GM12878 (cell line): ENCODE measurements at regions of chr3 and their contacts with region 1.

Region 1: GRCh38 chr3:112734718-112735350 is 93.9 kb upstream of the CCDC80 start:
- DNase-seq: peak; percentile 40
- ATAC-seq: peak; percentile 94
- H3K4me3 ChIP-seq: no peak overlapping the region
- H3K27ac ChIP-seq: no peak overlapping the region
- H3K4me1 ChIP-seq: no peaks in the 10 kb centered on the region
- H3K27me3 ChIP-seq: no peaks in the 10 kb centered on the region; a peak in 1 of 4 replicates
- CTCF ChIP-seq: peak; percentile 71 to 84 (median 71)
- EP300 ChIP-seq: no peak
- POLR2A ChIP-seq: no peak
- RAD21 ChIP-seq: peak; percentile 91

Region 2: DNA sequence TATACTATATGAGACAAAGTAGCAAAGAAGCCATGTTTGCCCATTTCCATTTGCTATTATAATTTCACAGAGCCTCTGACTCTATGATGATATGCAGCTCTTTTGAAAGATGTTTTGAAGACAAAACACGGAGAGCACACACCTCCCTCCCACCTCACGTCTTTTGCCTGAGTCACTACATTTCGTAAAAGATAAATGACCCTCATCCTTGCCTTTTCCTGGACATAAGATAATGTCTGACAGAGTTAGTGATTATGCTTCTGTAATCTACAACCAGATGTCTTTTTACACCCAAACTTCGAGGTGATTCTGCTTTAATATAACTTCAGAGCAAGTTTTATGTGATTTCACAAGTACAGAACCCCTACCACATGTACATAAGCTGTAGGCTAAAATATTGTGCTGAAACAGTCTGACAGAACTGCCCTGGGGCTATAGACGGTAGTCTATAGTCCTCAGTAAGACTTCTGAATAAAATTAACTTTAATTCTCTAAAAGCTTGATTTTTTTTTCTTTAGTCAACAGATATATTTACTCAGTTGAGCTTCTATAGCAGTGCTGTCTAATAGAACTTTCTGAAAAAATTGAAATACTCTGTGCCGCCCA is 11.9 kb after region 1 on chr3:
- CTCF ChIA-PET with region 1: interaction called, 65 read pairs
- POLR2A ChIA-PET with region 1: no interaction called
- RAD21 ChIA-PET with region 1: interaction called, 4 read pairs
- SMC1A ChIA-PET with region 1: interaction called, 46 read pairs
- in situ Hi-C with region 1: no loop called
- intact Hi-C with region 1: no loop called
- DNase-seq: no peak
- ATAC-seq: no peak
- H3K4me3 ChIP-seq: no peak overlapping the region
- H3K27ac ChIP-seq: no peak overlapping the region
- H3K4me1 ChIP-seq: no peaks in the 10 kb centered on the region
- H3K27me3 ChIP-seq: no peaks in the 10 kb centered on the region; a peak in 1 of 4 replicates
- CTCF ChIP-seq: no peak
- EP300 ChIP-seq: no peak
- POLR2A ChIP-seq: no peak
- RAD21 ChIP-seq: no peak

Region 3: DNA sequence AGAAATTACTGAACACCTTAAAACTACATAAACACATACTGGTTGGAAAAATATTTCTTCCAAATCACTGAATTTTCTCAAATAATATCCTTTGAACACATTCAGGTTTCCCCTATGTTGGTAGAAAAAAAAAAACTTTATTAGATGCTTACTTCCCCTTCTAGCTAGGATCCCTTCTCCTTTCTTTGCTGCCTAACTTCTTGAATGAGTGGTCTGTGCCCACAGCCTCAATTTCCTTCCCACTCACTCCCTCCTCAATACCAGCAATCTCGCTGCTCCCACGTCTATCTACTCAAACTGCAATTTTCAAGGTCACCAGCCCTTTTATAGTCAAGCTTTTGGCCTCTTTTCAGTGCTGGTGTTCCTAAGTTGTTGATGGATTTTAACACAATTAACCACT is 231.8 kb after region 1 on chr3:
- CTCF ChIA-PET with region 1: interaction called, 61 read pairs
- POLR2A ChIA-PET with region 1: no interaction called
- RAD21 ChIA-PET with region 1: interaction called, 62 read pairs
- SMC1A ChIA-PET with region 1: interaction called, 89 read pairs
- in situ Hi-C with region 1: no loop called
- intact Hi-C with region 1: no loop called
- DNase-seq: no peak
- ATAC-seq: no peak; the same call in 2 of the 3 replicates
- H3K4me3 ChIP-seq: no peak overlapping the region
- H3K27ac ChIP-seq: 0 out of 2 replicates have a peak overlapping the region, but pooled peaks have one; percentile 44
- H3K4me1 ChIP-seq: peaks cover 25% of the 10 kb centered on the region
- H3K27me3 ChIP-seq: no peaks in the 10 kb centered on the region
- CTCF ChIP-seq: no peak
- EP300 ChIP-seq: no peak
- POLR2A ChIP-seq: no peak
- RAD21 ChIP-seq: no peak

Region 4: DNA sequence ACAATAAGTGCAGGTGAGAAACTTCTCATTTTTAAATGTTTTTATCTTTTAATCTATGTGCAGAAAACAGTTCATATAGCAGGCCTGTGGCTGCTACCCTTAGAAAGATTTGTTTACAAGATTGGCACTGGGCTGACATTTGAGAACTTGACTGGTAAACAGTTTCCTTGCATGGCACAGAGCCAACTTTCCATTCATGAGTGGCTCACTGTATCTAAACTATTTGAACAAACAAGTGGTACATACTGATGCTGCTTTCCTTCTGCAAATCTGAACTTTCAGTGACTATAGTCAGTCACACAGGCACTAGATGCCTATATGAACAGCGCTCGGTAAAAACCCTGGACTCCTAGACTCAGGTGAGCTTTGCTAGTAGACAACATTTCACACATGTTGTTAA is 249.7 kb after region 1 on chr3:
- CTCF ChIA-PET with region 1: interaction called, 165 read pairs
- POLR2A ChIA-PET with region 1: no interaction called
- RAD21 ChIA-PET with region 1: interaction called, 99 read pairs
- SMC1A ChIA-PET with region 1: interaction called, 174 read pairs
- in situ Hi-C with region 1: loop called (anchors 5 kb)
- intact Hi-C with region 1: loop called (anchors 1 kb)
- DNase-seq: no peak
- ATAC-seq: no peak
- H3K4me3 ChIP-seq: no peak overlapping the region
- H3K27ac ChIP-seq: no peak overlapping the region
- H3K4me1 ChIP-seq: peaks cover 8% of the 10 kb centered on the region; the same call in 1 of the 2 replicates
- H3K27me3 ChIP-seq: no peaks in the 10 kb centered on the region
- CTCF ChIP-seq: no peak
- EP300 ChIP-seq: no peak
- POLR2A ChIP-seq: no peak
- RAD21 ChIP-seq: no peak

Region 5: GRCh38 chr3:113035387-113035982 is 300.7 kb after region 1 on chr3:
- CTCF ChIA-PET with region 1: interaction called, 23 read pairs
- POLR2A ChIA-PET with region 1: no interaction called
- RAD21 ChIA-PET with region 1: interaction called, 13 read pairs
- SMC1A ChIA-PET with region 1: interaction called, 27 read pairs
- in situ Hi-C with region 1: no loop called
- intact Hi-C with region 1: loop called (anchors 2 kb)
- DNase-seq: no peak
- ATAC-seq: peak; percentile 95
- H3K4me3 ChIP-seq: no peak overlapping the region
- H3K27ac ChIP-seq: no peak overlapping the region
- H3K4me1 ChIP-seq: no peaks in the 10 kb centered on the region
- H3K27me3 ChIP-seq: no peaks in the 10 kb centered on the region
- CTCF ChIP-seq: peak; percentile 72 to 92 (median 85)
- EP300 ChIP-seq: no peak
- POLR2A ChIP-seq: no peak
- RAD21 ChIP-seq: peak; percentile 61